ENCODE measurements at regions of chr3 and their contacts with region 1.

Region 1: GRCh38 chr3:177197041-177197727 is at the start of gene TBL1XR1:
- DNase-seq: peak; percentile 93
- ATAC-seq: peak; percentile 93
- total RNA-seq, gene TBL1XR1: 96.8 TPM

Region 2: GRCh38 chr3:176953106-176954060 is 243.8 kb before region 1 on chr3:
- intact Hi-C with region 1: loop called (anchors 10 kb)
- DNase-seq: peak; percentile 78
- ATAC-seq: peak; percentile 95

Region 3: GRCh38 chr3:177131927-177132636 is 65.1 kb before region 1 on chr3:
- intact Hi-C with region 1: loop called (anchors 2 kb)
- DNase-seq: no peak
- ATAC-seq: no peak

Region 4: GRCh38 chr3:177483182-177483967 is 286.2 kb after region 1 on chr3:
- intact Hi-C with region 1: loop called (anchors 10 kb)
- DNase-seq: no peak
- ATAC-seq: no peak

Region 5: GRCh38 chr3:177816667-177817208 is 619.6 kb after region 1 on chr3:
- intact Hi-C with region 1: loop called (anchors 5 kb)
- DNase-seq: no peak
- ATAC-seq: peak; percentile 60

Region 6: DNA sequence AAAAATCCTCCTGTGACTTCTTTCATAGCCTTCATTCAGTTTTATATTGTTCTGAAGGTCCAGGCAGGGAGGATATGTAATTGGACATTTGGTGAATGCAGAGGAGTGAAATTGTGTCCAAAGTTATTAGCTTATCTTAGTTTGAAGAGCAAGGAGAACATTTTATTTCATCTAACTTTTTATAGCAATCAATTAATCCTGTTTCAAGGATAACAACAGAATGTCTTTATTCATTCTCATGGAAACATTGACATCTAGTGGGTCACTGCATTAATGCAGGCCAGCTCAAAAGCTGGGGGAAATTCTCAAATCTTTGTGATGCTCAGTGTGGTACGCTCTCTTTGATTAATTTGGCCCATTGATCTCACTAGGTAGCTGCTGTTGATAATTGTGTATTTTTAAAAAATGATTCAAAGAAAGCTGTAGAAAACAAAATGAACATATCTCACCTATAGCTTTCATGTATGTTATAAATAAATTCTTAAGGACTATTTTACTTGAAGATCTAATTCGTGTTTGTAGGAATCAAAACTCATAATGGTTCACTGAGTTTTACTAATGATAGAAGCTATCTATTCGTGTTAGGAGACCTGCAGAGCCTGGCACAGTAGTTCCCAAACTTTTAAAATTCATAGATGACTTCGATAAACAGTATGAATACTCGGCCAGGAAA is 1188.2 kb after region 1 on chr3:
- intact Hi-C with region 1: loop called (anchors 10 kb)
- DNase-seq: no peak
- ATAC-seq: peak; percentile 86

Measured in Right ventricle myocardium inferior (tissue), 1 donor.